Activated CD8-positive, alpha-beta T cell treated with anti-CD3 and anti-CD28 coated beads for 36 hours (primary cell): ENCODE measurements at regions of chr14 and their contacts with region 1.

Region 1: DNA sequence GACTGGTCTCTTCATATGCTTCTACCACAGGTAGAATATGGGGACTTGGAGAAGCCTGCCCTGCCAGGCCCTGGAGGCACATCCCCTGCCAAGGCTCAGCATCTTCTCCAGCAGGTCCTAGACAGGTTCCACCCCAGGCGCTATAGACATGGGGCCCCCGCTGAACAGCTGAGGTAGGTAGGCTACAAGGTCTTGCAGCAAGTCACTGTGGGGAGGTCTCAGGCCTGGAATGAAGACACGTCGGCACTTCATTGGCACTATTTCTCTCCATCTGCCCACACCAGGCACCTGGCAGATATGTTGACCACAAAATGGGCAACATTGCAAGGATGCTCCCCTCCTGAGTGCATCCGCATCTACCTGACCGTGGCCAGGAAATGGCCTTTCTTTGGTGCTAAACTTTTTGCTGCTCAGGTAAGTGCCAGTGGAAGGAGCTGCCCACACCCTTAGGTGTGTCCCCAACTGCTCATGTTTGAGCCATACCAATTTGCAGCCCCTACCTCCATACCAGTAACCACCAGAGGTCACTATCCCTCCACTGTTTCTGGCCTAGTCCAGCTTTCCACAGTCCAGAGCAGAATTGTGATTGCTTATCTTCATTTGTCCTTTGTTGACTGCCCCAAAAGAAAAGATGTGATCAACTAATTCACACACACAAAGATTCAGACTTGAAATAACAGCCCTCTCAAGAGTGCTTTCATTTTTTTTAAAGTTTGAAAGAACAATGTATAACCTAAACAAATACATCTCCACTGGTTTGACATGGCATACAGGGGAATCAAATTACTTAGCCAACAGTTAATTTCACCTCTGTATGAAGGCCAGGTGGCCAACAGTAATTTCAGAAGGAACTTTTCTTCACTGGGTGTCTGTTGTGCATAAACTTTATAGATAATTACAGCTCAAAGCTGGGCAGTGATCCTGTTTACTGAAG is 16.1 kb downstream of the PIGH start:
- DNase-seq: peak; percentile 39
- ATAC-seq: peak; percentile 80
- H3K4me3 Mint-ChIP-seq: no peak overlapping the region
- H3K27ac Mint-ChIP-seq: no peak overlapping the region
- H3K4me1 Mint-ChIP-seq: no peaks in the 10 kb centered on the region
- H3K27me3 Mint-ChIP-seq: no peaks in the 10 kb centered on the region
- CTCF ChIP-seq: peak; percentile 51

Region 2: DNA sequence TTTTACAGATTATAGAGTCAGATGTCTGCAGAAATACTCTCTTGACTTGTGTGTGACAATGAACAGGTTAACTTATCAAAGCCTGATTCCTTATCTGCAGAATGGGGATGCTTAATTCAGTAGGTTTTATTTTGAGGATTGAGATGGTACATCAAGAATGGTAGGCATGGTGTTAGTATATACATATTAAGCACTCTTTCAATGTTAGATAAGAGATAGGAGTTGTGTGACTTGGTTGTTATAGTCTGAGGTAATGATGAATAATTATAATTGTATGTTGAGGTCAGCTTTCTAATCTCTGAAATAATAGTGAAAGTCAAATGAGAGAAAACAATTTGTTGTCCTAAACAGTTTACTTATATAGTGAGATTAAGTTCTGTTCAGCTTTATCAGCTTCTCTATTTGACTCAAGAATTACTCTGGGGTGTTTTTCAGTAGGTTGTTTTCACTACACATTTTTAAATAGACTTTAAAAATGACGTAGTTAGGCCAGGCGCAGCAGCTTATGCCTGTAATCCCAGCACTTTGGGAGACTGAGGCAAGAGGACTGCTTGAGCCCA is 330.8 kb before region 1 on chr14:
- CTCF ChIA-PET with region 1: no interaction called
- POLR2A ChIA-PET with region 1: no interaction called
- intact Hi-C with region 1: no loop called
- DNase-seq: no peak
- ATAC-seq: no peak
- H3K4me3 Mint-ChIP-seq: no peak overlapping the region
- H3K27ac Mint-ChIP-seq: no peak overlapping the region
- H3K4me1 Mint-ChIP-seq: peaks cover 16% of the 10 kb centered on the region
- H3K27me3 Mint-ChIP-seq: no peaks in the 10 kb centered on the region
- CTCF ChIP-seq: no peak

Region 3: DNA sequence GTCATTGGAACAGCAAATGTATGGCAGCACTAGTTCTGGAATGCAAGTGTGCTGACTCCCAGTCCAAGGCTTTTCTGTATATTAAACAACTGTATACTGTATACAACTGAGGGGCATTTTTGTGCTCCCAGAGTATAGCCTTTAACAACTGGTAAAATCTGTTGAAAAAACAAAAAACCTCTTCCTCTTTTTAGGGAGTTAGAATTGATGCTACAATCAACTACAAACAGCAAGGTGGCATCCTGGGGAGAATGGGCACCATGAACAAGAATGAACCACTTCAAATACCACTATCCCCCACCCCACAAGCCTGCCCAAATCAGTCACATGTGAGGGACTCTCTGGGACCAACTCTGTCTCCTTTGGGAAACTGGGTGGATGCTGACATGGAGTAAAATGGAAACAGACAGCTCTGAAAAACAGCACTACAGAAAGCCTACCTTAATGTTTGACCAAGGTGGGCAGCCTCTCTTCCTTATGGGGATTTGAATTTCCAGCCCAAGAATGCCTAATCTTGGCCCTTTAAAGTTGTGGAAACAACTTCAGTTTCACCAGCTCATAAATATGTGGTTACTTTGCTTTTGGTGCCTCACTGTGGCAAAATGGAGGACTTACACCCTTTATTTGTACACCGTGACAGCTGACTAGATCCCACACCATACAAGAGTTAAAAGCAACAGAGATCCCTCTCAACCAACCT is 82.9 kb after region 1 on chr14:
- CTCF ChIA-PET with region 1: interaction called, 35 read pairs
- POLR2A ChIA-PET with region 1: no interaction called
- intact Hi-C with region 1: no loop called
- DNase-seq: peak; percentile 44
- ATAC-seq: peak; percentile 87
- H3K4me3 Mint-ChIP-seq: no peak overlapping the region
- H3K27ac Mint-ChIP-seq: peak overlapping the region; percentile 61
- H3K4me1 Mint-ChIP-seq: peaks cover 53% of the 10 kb centered on the region
- H3K27me3 Mint-ChIP-seq: no peaks in the 10 kb centered on the region
- CTCF ChIP-seq: peak; percentile 47